Aorta (tissue), 5 donors: ENCODE measurements at regions of chr3 and their contacts with region 1.

Region 1: GRCh38 chr3:15535732-15536131 is 14.2 kb upstream of the COLQ start:
- DNase-seq: no peak
- ATAC-seq: no peak
- H3K4me3 ChIP-seq: no peak overlapping the region
- H3K27ac ChIP-seq: no peak overlapping the region
- H3K4me1 ChIP-seq: no peaks in the 10 kb centered on the region
- H3K27me3 ChIP-seq: no peaks in the 10 kb centered on the region

Region 2: GRCh38 chr3:15440891-15441290 is 94.8 kb before region 1 on chr3:
- intact Hi-C with region 1: loop called in 1 of 2 experiments (anchors 10 kb)
- DNase-seq: no peak
- ATAC-seq: no peak
- H3K4me3 ChIP-seq: no peak overlapping the region
- H3K27ac ChIP-seq: peak overlapping the region; percentile 69 to 72
- H3K4me1 ChIP-seq: peaks cover 2 to 3% of the 10 kb centered on the region in 2 donors
- H3K27me3 ChIP-seq: no peaks in the 10 kb centered on the region

Region 3: DNA sequence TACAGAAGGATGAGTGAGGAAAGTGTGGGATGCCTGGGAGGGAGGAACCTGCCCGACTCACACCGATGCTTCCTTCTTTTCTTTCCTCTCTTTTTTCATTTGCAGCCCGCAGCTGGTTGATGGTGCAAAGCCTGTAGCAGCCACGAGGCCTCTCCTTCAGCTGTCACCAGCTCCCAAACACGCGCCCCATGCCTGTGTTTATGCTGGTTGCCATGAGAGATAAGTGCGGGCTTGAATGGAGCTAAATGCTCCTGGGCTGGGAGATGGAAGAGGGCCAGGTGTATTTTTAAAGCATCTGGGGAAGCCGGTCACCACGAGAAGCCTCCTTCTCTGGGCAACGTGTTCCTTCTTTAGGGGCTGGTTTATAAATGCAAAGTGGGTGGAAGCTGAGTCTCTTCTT is 23.6 kb before region 1 on chr3:
- intact Hi-C with region 1: no loop called
- DNase-seq: peak; percentile 70 to 79
- ATAC-seq: peak; percentile 76
- H3K4me3 ChIP-seq: no peak overlapping the region
- H3K27ac ChIP-seq: no peak overlapping the region
- H3K4me1 ChIP-seq: peaks cover 0 to 4% of the 10 kb centered on the region in 2 donors
- H3K27me3 ChIP-seq: no peaks in the 10 kb centered on the region

Region 4: GRCh38 chr3:16227566-16227965 is 691.8 kb after region 1 on chr3:
- intact Hi-C with region 1: no loop called
- DNase-seq: no peak
- ATAC-seq: no peak
- H3K4me3 ChIP-seq: no peak overlapping the region
- H3K27ac ChIP-seq: no peak overlapping the region
- H3K4me1 ChIP-seq: no peaks in the 10 kb centered on the region
- H3K27me3 ChIP-seq: no peaks in the 10 kb centered on the region